HCT116 (cell line): ENCODE measurements at regions of chr13 and their contacts with region 1.

Region 1: DNA sequence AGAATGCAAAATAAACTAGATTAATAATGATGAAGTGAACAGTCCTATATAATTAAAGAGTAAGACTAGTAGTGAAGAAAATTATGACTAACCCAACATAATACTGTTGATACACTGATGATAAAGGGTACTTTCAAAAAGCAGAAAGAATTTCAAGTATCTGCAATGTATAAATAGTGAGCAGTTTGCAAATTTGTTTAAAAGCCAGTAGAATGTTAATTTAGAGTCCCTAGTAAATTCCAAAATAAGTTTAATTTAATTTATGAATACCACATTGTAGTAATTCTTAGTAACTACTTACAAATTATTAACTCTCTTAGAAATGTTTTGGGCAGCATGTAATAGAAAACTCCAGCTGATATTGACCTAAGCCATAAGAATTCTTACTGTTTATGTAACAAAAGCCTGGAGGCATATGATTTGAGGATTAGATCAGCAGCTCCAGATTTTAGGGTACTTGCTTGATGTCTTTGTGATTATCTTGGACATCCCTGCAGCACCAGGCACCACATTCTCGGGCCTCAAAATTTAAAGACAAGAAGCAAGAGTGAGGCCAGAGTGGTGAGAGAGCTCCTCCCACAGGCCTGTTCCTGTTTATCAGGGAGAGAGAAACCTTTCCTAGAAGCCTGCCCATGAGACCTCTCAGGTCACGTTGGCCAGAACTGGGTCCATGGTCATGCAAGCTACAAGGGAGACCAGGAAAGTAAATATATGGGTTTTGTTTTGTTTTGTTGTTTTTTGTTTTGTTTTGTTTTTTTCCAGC is 67.6 kb upstream of the TDRD3 start:
- DNase-seq: peak; percentile 18
- ATAC-seq: peak; percentile 86
- H3K4me3 ChIP-seq: no peak overlapping the region
- H3K27ac ChIP-seq: no peak overlapping the region
- H3K4me1 ChIP-seq: no peaks in the 10 kb centered on the region
- H3K27me3 ChIP-seq: peaks cover 9% of the 10 kb centered on the region; the same call in 1 of the 2 replicates
- CTCF ChIP-seq: peak; percentile 20 to 57 (median 39); a peak in 4 of 6 replicates
- POLR2A ChIP-seq: no peak
- RAD21 ChIP-seq: peak; percentile 60

Region 2: GRCh38 chr13:59210543-59210942 is 1118.9 kb before region 1 on chr13:
- CTCF ChIA-PET with region 1: no interaction called
- POLR2A ChIA-PET with region 1: no interaction called
- RAD21 ChIA-PET with region 1: no interaction called
- intact Hi-C with region 1: no loop called
- DNase-seq: no peak
- ATAC-seq: no peak
- H3K4me3 ChIP-seq: no peak overlapping the region
- H3K27ac ChIP-seq: no peak overlapping the region
- H3K4me1 ChIP-seq: no peaks in the 10 kb centered on the region
- H3K27me3 ChIP-seq: no peaks in the 10 kb centered on the region
- CTCF ChIP-seq: no peak
- POLR2A ChIP-seq: no peak
- RAD21 ChIP-seq: no peak

Region 3: DNA sequence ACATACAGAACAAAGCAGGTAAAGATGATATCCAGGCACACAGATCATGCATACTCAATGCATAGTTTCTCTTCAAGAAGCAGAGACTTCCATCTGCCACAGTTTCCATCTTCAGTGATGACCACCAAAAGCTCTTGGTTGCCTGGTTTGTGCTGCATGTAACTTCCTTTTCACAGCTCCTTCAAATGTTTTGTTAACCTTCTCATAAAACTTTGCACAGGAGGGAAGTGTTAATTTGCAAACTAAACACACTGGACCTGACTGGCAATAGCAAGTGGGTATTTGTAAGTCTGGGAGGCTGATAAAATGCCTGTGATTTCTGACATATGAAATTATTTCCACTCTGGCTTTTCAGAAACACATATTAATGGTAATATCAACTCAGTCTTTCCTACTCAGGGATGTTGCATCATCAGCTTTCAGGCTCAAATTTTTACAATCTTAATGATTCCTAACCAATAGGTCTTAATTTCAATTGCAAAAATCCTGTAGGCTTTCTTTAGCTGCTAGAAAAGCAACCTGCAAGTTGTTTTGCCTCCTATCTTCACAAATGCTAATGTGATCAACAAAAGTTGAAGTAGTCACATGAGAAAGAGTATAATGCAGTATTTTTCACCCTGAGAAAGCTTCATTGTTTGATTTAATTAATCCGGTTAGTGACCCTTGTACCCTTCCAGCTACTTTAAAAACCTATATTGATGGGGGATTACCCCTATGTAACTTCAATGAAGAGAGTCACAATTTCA is 741.3 kb before region 1 on chr13:
- CTCF ChIA-PET with region 1: no interaction called
- POLR2A ChIA-PET with region 1: no interaction called
- RAD21 ChIA-PET with region 1: no interaction called
- intact Hi-C with region 1: no loop called
- DNase-seq: no peak
- ATAC-seq: no peak
- H3K4me3 ChIP-seq: no peak overlapping the region
- H3K27ac ChIP-seq: no peak overlapping the region
- H3K4me1 ChIP-seq: no peaks in the 10 kb centered on the region
- H3K27me3 ChIP-seq: peaks cover 17% of the 10 kb centered on the region; the same call in 1 of the 2 replicates
- CTCF ChIP-seq: no peak
- POLR2A ChIP-seq: no peak
- RAD21 ChIP-seq: no peak

Region 4: GRCh38 chr13:59906413-59907049 is 422.9 kb before region 1 on chr13:
- CTCF ChIA-PET with region 1: no interaction called
- POLR2A ChIA-PET with region 1: no interaction called
- RAD21 ChIA-PET with region 1: no interaction called
- intact Hi-C with region 1: loop called (anchors 10 kb)
- DNase-seq: peak; percentile 4
- ATAC-seq: peak; percentile 53; the same call in 1 of the 2 replicates
- H3K4me3 ChIP-seq: no peak overlapping the region
- H3K27ac ChIP-seq: no peak overlapping the region
- H3K4me1 ChIP-seq: no peaks in the 10 kb centered on the region
- H3K27me3 ChIP-seq: no peaks in the 10 kb centered on the region
- CTCF ChIP-seq: peak in 2 of 3 experiments; percentile 54 to 57; a peak in 4 of 6 replicates
- POLR2A ChIP-seq: no peak
- RAD21 ChIP-seq: peak; percentile 53

Region 5: DNA sequence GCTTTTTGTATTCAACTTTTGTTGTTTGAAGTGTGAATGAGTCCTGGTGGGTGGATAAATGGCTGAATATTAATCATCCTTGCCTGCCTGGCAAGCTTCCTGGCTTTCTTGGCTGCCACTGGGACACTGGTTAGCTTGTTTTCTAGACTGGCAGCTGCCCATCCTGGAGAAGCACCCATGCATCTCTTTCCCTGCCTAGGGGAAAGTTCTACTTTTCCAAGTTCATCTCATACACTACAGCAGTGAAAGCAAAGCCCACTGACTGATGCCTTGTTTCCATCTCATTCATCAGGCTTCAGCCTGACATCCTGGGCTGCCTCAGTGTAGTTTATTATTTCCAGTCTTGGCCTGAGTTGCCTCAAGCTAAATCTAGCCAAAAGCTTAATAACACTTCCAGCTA is 841.5 kb after region 1 on chr13:
- CTCF ChIA-PET with region 1: no interaction called
- POLR2A ChIA-PET with region 1: no interaction called
- RAD21 ChIA-PET with region 1: no interaction called
- intact Hi-C with region 1: no loop called
- DNase-seq: no peak
- ATAC-seq: no peak
- H3K4me3 ChIP-seq: no peak overlapping the region
- H3K27ac ChIP-seq: no peak overlapping the region
- H3K4me1 ChIP-seq: no peaks in the 10 kb centered on the region
- H3K27me3 ChIP-seq: no peaks in the 10 kb centered on the region
- CTCF ChIP-seq: no peak
- POLR2A ChIP-seq: no peak
- RAD21 ChIP-seq: no peak